ENCODE measurements at regions of chr7 and their contacts with region 1.

Region 1: DNA sequence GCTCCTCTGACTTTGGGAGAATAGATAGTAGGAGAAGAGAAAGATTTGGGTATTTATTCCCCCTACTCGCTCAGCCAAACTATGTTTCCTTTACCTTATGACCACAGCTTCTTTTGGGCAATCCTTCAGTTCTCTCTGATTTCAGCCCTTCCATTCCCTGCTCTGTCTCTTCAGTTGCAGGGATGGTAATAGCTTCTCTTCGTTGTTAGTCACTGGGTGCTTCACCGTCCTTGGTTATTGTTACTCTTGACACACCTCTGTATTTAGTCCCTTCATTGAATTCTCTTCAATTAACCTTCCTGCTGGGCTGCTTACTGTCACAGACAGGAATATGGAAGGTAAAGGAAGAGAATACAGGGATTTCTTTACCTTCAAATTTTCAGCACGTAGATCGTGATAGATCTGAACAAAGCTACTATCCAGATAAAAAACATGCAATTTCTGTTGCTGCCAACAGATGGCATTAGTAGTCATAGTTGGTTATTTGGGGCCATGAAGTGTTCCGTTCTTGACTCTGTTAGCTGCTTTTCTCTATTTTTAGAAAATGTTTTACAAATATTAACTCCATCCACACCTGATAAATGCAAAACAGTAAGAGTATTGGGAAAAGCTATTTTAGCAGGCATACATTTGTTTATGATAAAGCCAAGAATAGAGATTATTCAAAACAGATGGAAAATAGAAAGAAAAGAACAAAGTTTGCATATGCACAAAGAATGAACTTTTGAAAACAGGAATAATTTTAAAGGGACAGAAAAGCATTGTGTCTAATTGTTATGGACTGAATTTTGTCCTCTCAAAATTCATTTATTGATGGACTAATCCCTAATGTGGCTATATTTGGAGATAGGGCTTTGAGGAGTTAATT is 14.0 kb upstream of the PTTG1IP2 start:
- DNase-seq: peak; percentile 32 to 44
- ATAC-seq: peak; percentile 78 to 89
- H3K4me3 ChIP-seq: no peak overlapping the region
- H3K27ac ChIP-seq: no peak overlapping the region
- H3K4me1 ChIP-seq: no peaks in the 10 kb centered on the region
- CTCF ChIP-seq: peak; percentile 61
- EP300 ChIP-seq: no peak
- POLR2A ChIP-seq: no peak
- RAD21 ChIP-seq: peak; percentile 65 to 66

Region 2: GRCh38 chr7:91034459-91035368 is 579.3 kb after region 1 on chr7:
- CTCF ChIA-PET with region 1: interaction called, 12 read pairs
- POLR2A ChIA-PET with region 1: no interaction called
- DNase-seq: peak; percentile 3 to 25
- ATAC-seq: peak in 1 of 2 experiments; percentile 71; a peak in 3 of 6 replicates
- H3K4me3 ChIP-seq: no peak overlapping the region
- H3K27ac ChIP-seq: no peak overlapping the region
- H3K4me1 ChIP-seq: no peaks in the 10 kb centered on the region
- CTCF ChIP-seq: peak; percentile 42
- EP300 ChIP-seq: no peak
- POLR2A ChIP-seq: no peak
- RAD21 ChIP-seq: peak; percentile 52 to 66; a peak in 4 of 5 replicates

Measured in A549 (cell line).